ENCODE measurements at regions of chr15 and their contacts with region 1.

Region 1: GRCh38 chr15:92714477-92715401 is 59.2 kb upstream of the FAM174B start:
- DNase-seq: peak; percentile 44
- ATAC-seq: peak; percentile 91
- H3K4me3 ChIP-seq: peak overlapping the region; percentile 51 to 70 (median 63)
- H3K27ac ChIP-seq: no peak overlapping the region
- H3K4me1 ChIP-seq: 0 out of 2 replicates have a peak, but pooled peaks cover 6% of the 10 kb centered on the region
- H3K27me3 ChIP-seq: peaks cover 1 to 14% of the 10 kb centered on the region in 2 experiments; a peak in 3 of 5 replicates
- CTCF ChIP-seq: peak; percentile 89
- EP300 ChIP-seq: no peak
- POLR2A ChIP-seq: no peak
- RAD21 ChIP-seq: peak; percentile 80

Region 2: DNA sequence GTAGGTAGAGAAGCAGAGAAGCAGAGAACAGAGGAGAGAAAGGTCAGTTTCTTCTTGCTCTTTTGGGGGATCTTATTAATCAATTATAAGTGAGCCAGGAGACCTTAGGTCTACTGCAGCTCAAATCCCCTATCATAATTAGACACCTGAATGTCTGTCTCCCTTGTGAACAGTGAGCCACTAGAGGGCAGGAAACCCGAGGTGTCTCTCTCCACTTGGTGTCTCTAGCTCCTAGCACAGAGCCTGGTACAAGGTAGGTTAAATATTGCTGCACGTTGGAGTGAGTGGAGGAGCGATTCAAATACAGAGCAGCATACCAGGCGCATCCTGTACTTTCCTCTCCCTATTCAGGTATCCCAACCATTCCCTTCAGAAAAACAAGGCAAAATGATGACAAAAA is 323.1 kb before region 1 on chr15:
- CTCF ChIA-PET with region 1: no interaction called
- POLR2A ChIA-PET with region 1: no interaction called
- in situ Hi-C with region 1: no loop called
- intact Hi-C with region 1: loop called (anchors 2 kb)
- DNase-seq: peak; percentile 6
- ATAC-seq: peak; percentile 88
- H3K4me3 ChIP-seq: no peak overlapping the region
- H3K27ac ChIP-seq: no peak overlapping the region
- H3K4me1 ChIP-seq: no peaks in the 10 kb centered on the region
- H3K27me3 ChIP-seq: peaks cover 3 to 61% of the 10 kb centered on the region in 2 experiments; a peak in 4 of 5 replicates
- CTCF ChIP-seq: peak; percentile 24
- EP300 ChIP-seq: no peak
- POLR2A ChIP-seq: no peak
- RAD21 ChIP-seq: no peak

Region 3: DNA sequence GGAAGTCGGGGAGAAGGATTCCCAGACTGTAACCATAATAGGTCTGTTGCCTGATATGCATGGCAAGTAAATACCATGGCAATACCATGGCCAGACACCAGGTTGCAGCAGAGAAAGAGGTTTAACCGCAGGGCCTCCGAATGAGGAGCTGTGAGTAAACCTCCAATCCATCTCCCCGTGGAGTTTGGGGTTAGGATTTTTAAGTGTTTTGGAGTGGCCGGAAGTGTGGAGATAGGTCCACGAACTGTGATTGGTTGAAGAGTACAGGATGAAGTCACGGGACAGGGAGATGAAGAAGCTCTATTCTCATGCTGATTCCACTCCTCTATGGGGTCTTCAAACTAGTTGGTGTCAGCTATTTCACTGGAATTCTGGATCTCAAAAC is 193.1 kb before region 1 on chr15:
- CTCF ChIA-PET with region 1: interaction called, 22 read pairs
- POLR2A ChIA-PET with region 1: interaction called, 3 read pairs
- in situ Hi-C with region 1: loop called (anchors 10 kb)
- intact Hi-C with region 1: loop called (anchors 1 kb)
- DNase-seq: peak; percentile 51
- ATAC-seq: peak; percentile 96
- H3K4me3 ChIP-seq: no peak overlapping the region
- H3K27ac ChIP-seq: no peak overlapping the region
- H3K4me1 ChIP-seq: no peaks in the 10 kb centered on the region
- H3K27me3 ChIP-seq: no peaks in the 10 kb centered on the region
- CTCF ChIP-seq: peak; percentile 80
- EP300 ChIP-seq: no peak
- POLR2A ChIP-seq: no peak
- RAD21 ChIP-seq: peak; percentile 66

Region 4: DNA sequence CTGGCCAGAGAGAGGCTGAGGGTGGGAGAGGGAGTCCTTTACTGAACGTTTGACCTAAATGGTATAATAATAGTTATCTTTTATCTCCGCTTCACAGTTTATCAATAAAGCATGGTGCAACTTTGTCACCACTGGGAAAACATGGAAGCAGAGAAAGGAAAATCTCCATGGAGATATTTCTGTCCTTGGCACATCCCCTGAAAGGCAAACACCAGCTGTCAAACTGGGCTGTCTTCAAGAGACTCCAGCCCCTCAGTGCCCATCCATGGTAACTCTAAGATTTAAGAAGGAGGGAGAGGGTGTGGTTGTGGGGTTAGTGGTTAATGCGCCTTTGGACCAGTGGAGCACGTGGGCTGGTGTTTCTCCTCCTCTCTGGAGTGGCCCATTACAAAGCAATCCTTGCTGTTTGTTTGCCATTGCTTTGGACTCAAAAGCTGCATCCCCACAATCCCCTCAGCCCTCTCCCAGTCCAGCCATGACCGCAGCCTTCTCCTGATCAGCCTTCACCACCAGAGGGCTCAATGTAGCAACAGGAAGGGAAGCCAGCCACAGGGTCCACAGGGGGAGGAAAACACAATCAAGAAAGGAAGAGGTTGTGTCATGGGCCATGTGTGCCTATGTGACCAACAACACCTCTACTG is 20.9 kb before region 1 on chr15:
- CTCF ChIA-PET with region 1: interaction called, 15 read pairs
- POLR2A ChIA-PET with region 1: no interaction called
- in situ Hi-C with region 1: no loop called
- intact Hi-C with region 1: loop called (anchors 1 kb)
- DNase-seq: peak; percentile 50
- ATAC-seq: peak; percentile 100
- H3K4me3 ChIP-seq: no peak overlapping the region
- H3K27ac ChIP-seq: no peak overlapping the region
- H3K4me1 ChIP-seq: no peaks in the 10 kb centered on the region
- H3K27me3 ChIP-seq: peaks cover 0 to 12% of the 10 kb centered on the region in 2 experiments; a peak in 2 of 5 replicates
- CTCF ChIP-seq: peak; percentile 72
- EP300 ChIP-seq: no peak
- POLR2A ChIP-seq: no peak
- RAD21 ChIP-seq: no peak

Region 5: GRCh38 chr15:92763459-92763858 is 48.7 kb after region 1 on chr15:
- CTCF ChIA-PET with region 1: no interaction called
- POLR2A ChIA-PET with region 1: no interaction called
- in situ Hi-C with region 1: no loop called
- intact Hi-C with region 1: no loop called
- DNase-seq: no peak
- ATAC-seq: no peak
- H3K4me3 ChIP-seq: no peak overlapping the region
- H3K27ac ChIP-seq: no peak overlapping the region
- H3K4me1 ChIP-seq: no peaks in the 10 kb centered on the region
- H3K27me3 ChIP-seq: no peaks in the 10 kb centered on the region
- CTCF ChIP-seq: no peak
- EP300 ChIP-seq: no peak
- POLR2A ChIP-seq: no peak
- RAD21 ChIP-seq: no peak